ENCODE measurements at regions of chr11 and their contacts with region 1.

Region 1: GRCh38 chr11:72471005-72471898 is 36.9 kb upstream of the CLPB start:
- DNase-seq: peak; percentile 63
- CTCF ChIP-seq: peak; percentile 84

Region 2: GRCh38 chr11:72378704-72379384 is 92.4 kb before region 1 on chr11:
- in situ Hi-C with region 1: no loop called
- DNase-seq: no peak
- CTCF ChIP-seq: no peak

Region 3: DNA sequence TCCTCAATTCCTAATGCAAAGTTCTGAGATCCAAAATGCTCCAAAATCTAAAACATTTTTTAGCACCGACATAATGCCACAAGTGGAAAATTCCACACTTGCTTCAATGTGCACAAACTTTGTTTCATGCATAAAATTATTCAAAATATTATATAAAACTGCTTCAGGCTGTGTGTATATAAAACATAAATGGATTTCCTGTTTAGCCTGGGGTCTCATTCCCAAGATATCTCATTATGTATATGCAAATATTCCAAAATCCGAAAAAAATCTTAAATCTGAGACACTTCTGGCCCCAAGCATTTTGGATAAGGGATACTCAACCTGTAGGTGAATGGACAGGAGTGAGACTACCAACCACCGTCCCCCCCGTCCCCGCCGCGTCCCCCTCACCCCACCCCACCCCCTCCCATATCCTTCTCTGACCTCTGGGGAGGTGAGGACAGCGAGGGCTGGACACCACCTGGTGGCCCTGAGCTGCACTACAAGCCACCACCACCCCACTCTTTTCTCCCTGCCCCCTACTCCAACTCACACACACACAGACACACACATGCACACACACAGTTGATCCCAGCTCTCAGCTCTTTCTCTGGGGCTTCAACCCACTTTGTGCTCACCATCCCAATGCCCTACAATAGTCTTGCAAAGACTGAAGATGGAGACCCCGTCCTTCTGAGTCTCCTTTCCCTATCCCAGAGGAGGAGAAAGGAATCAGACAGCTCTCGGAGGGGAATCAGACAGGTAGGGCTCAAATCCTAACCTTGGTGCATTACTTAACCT is 102.0 kb after region 1 on chr11:
- in situ Hi-C with region 1: loop called (anchors 10 kb)
- DNase-seq: peak; percentile 66
- CTCF ChIP-seq: peak; percentile 73

Region 4: DNA sequence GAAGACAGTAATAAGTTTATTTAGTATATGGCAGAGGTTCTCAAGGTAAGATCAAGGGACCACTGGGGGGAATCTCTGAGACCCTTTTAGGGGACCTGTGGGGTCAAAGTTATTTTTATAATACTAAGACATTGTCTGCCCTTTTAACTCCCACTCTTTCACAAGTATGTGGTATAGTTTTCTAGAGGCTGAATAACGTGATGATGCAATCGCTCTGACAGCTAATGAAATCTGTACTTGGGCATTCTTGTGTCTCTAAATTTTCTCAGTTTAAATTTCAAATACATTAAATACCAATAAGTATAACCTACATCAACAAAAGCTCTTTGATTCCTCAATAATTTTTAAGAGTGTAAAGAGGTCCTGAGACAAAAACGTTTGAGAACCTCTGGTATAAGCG is 490.8 kb after region 1 on chr11:
- in situ Hi-C with region 1: no loop called
- DNase-seq: no peak
- CTCF ChIP-seq: no peak